ENCODE measurements at regions of chr7 and their contacts with region 1.

Region 1: GRCh38 chr7:7640221-7641128 is at the start of gene UMAD1:
- DNase-seq: peak; percentile 99
- ATAC-seq: peak; percentile 92
- H3K4me3 Mint-ChIP-seq: peak within 1 kb of the TSS; percentile 93
- H3K27ac Mint-ChIP-seq: peak within 1 kb of the TSS; percentile 99
- H3K4me1 Mint-ChIP-seq: peaks cover 38% of the 10 kb centered on the region
- H3K27me3 Mint-ChIP-seq: no peaks in the 10 kb centered on the region
- total RNA-seq, gene UMAD1: 13.1 to 14.5 TPM

Region 2: GRCh38 chr7:6729492-6730342 is 910.8 kb before region 1 on chr7:
- CTCF ChIA-PET with region 1: no interaction called
- POLR2A ChIA-PET with region 1: no interaction called
- intact Hi-C with region 1: loop called in 1 of 2 experiments (anchors 5 kb)
- DNase-seq: peak; percentile 92
- ATAC-seq: peak; percentile 99
- H3K4me3 Mint-ChIP-seq: peak overlapping the region; percentile 87
- H3K27ac Mint-ChIP-seq: peak overlapping the region; percentile 93
- H3K4me1 Mint-ChIP-seq: peaks cover 23% of the 10 kb centered on the region
- H3K27me3 Mint-ChIP-seq: no peaks in the 10 kb centered on the region

Region 3: GRCh38 chr7:7672545-7673239 is 32.2 kb after region 1 on chr7:
- CTCF ChIA-PET with region 1: interaction called, 5 read pairs
- POLR2A ChIA-PET with region 1: no interaction called
- intact Hi-C with region 1: loop called (anchors 1 kb)
- DNase-seq: peak; percentile 52
- ATAC-seq: peak; percentile 92
- H3K4me3 Mint-ChIP-seq: peak overlapping the region; percentile 57
- H3K27ac Mint-ChIP-seq: peak overlapping the region; percentile 85
- H3K4me1 Mint-ChIP-seq: peaks cover 42% of the 10 kb centered on the region
- H3K27me3 Mint-ChIP-seq: no peaks in the 10 kb centered on the region

Region 4: GRCh38 chr7:7761340-7761980 is 121.0 kb after region 1 on chr7:
- CTCF ChIA-PET with region 1: interaction called, 3 read pairs
- POLR2A ChIA-PET with region 1: interaction called, 3 read pairs
- intact Hi-C with region 1: loop called (anchors 1 to 5 kb)
- DNase-seq: no peak
- ATAC-seq: peak; percentile 34
- H3K4me3 Mint-ChIP-seq: peak overlapping the region; percentile 74
- H3K27ac Mint-ChIP-seq: peak overlapping the region; percentile 87
- H3K4me1 Mint-ChIP-seq: peaks cover 41% of the 10 kb centered on the region
- H3K27me3 Mint-ChIP-seq: no peaks in the 10 kb centered on the region

Region 5: GRCh38 chr7:8125680-8126444 is 485.4 kb after region 1 on chr7:
- CTCF ChIA-PET with region 1: no interaction called
- POLR2A ChIA-PET with region 1: interaction called, 3 read pairs
- intact Hi-C with region 1: loop called (anchors 2 kb)
- DNase-seq: peak; percentile 88
- ATAC-seq: peak; percentile 93
- H3K4me3 Mint-ChIP-seq: peak overlapping the region; percentile 62
- H3K27ac Mint-ChIP-seq: peak overlapping the region; percentile 95
- H3K4me1 Mint-ChIP-seq: peaks cover 81% of the 10 kb centered on the region
- H3K27me3 Mint-ChIP-seq: peaks cover 5% of the 10 kb centered on the region

Region 6: GRCh38 chr7:8176370-8177081 is 536.1 kb after region 1 on chr7:
- CTCF ChIA-PET with region 1: no interaction called
- POLR2A ChIA-PET with region 1: no interaction called
- intact Hi-C with region 1: loop called in 1 of 2 experiments (anchors 1 kb)
- DNase-seq: peak; percentile 74
- ATAC-seq: peak; percentile 85
- H3K4me3 Mint-ChIP-seq: peak overlapping the region; percentile 63
- H3K27ac Mint-ChIP-seq: peak overlapping the region; percentile 95
- H3K4me1 Mint-ChIP-seq: peaks cover 42% of the 10 kb centered on the region
- H3K27me3 Mint-ChIP-seq: no peaks in the 10 kb centered on the region

Measured in activated CD4-positive, alpha-beta T cell treated with anti-CD3 and anti-CD28 coated beads for 36 hours (primary cell).